ENCODE measurements at regions of chr19 and their contacts with region 1.

Region 1: DNA sequence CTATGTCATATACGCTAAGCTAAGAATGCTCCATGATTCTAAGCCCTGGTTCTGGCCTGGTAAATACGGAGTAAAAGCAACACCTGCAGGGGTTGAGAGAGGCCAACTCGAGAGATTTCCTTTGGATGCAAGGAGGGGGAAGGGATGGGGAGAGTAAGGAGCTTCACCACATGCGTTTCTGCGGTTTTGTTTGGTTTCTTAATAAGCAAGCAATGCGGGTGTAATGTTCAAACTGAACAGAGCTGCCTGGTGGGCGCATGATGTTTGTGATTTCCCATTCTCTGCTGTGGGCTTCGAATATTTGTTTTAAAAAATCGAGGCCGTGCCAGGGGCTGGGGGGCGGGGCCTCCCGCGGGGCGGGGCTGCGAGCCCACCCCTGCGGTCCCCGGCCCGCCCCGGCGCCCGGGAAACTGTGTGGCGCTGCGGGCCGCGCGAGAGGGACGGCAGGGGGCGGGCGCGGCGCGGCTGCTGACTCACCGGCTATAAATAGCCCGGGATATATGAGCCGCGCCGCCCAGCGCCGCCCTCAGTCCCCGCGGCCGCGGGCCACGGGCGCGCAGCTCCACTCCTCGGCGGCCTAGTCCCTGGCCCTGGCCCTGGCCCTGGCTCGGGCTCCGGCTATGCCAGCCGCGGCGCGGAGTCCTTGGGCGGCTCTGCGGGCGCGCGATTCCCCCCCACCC is 5.1 kb downstream of the BBC3 start:
- DNase-seq: peak; percentile 68 to 94 (median 82)
- ATAC-seq: peak; percentile 61 to 63 (median 62)
- H3K4me3 ChIP-seq: peak overlapping the region in 1 of 2 donors; percentile 53
- H3K4me3 Mint-ChIP-seq: peak overlapping the region in 2 of 3 donors; percentile 41 to 74
- H3K27ac ChIP-seq: peak overlapping the region; percentile 54
- H3K27ac Mint-ChIP-seq: peak overlapping the region; percentile 74 to 92
- H3K4me1 ChIP-seq: peaks cover 27 to 44% of the 10 kb centered on the region in 2 experiments
- H3K4me1 Mint-ChIP-seq: peaks cover 12 to 16% (median 16%) of the 10 kb centered on the region in 3 donors
- H3K27me3 ChIP-seq: peaks cover 0 to 2% of the 10 kb centered on the region in 2 experiments
- H3K27me3 Mint-ChIP-seq: no peaks in the 10 kb centered on the region

Region 2: GRCh38 chr19:47210689-47211316 is 15.1 kb before region 1 on chr19:
- CTCF ChIA-PET with region 1: interaction called, 3 to 38 read pairs
- POLR2A ChIA-PET with region 1: interaction called, 6 to 7 read pairs
- DNase-seq: peak; percentile 49 to 89 (median 72)
- ATAC-seq: peak; percentile 67 to 91 (median 80)
- H3K4me3 ChIP-seq: no peak overlapping the region
- H3K4me3 Mint-ChIP-seq: no peak overlapping the region
- H3K27ac ChIP-seq: no peak overlapping the region
- H3K27ac Mint-ChIP-seq: peak overlapping the region; percentile 71 to 80
- H3K4me1 ChIP-seq: peaks cover 0 to 10% of the 10 kb centered on the region in 2 experiments
- H3K4me1 Mint-ChIP-seq: peaks cover 9 to 11% (median 11%) of the 10 kb centered on the region in 3 donors
- H3K27me3 ChIP-seq: no peaks in the 10 kb centered on the region
- H3K27me3 Mint-ChIP-seq: no peaks in the 10 kb centered on the region